Posterior vena cava (tissue), 2 donors: ENCODE measurements at regions of chr9 and their contacts with region 1.

Region 1: GRCh38 chr9:79357616-79358015 is 214.1 kb upstream of the TLE4 start:
- DNase-seq: no peak

Region 2: GRCh38 chr9:79046401-79046800 is 311.2 kb before region 1 on chr9:
- intact Hi-C with region 1: loop called in 1 of 2 experiments (anchors 5 kb)
- DNase-seq: no peak

Region 3: DNA sequence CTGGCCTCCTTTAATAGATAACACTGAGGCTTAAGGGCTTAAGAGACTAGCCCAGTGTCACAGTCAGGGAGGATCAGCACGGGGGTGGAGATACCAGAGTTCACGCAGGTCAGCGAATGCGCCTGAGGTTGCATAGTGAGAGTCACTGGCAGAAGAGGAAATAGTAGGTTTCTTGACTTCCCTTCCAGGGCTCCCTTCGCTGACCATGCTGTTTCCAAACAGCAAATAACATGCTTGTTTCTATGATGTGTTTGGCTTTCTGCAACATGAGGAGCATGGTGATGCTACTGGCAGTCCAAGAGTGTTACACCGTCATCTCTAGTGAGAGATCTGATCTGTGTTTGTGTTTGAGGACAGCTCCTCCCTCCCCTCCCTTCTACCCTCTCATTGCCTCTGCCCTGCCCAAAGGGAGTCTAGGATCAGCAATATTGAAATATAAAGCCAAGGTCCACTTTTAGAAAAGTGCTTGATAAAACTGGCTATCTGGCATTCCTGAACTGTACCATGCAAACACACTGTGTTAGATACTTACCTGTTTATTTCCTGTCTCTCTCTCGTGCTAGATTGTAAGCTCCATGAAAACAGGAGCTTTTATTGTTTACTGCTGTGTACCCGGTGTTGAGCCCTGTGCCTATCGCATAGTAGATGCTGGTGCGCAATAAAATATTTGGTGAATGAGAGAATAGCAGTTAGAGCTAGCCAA is 226.5 kb after region 1 on chr9:
- intact Hi-C with region 1: no loop called
- DNase-seq: peak; percentile 86